ENCODE measurements at regions of chr16 and their contacts with region 1.

Region 1: DNA sequence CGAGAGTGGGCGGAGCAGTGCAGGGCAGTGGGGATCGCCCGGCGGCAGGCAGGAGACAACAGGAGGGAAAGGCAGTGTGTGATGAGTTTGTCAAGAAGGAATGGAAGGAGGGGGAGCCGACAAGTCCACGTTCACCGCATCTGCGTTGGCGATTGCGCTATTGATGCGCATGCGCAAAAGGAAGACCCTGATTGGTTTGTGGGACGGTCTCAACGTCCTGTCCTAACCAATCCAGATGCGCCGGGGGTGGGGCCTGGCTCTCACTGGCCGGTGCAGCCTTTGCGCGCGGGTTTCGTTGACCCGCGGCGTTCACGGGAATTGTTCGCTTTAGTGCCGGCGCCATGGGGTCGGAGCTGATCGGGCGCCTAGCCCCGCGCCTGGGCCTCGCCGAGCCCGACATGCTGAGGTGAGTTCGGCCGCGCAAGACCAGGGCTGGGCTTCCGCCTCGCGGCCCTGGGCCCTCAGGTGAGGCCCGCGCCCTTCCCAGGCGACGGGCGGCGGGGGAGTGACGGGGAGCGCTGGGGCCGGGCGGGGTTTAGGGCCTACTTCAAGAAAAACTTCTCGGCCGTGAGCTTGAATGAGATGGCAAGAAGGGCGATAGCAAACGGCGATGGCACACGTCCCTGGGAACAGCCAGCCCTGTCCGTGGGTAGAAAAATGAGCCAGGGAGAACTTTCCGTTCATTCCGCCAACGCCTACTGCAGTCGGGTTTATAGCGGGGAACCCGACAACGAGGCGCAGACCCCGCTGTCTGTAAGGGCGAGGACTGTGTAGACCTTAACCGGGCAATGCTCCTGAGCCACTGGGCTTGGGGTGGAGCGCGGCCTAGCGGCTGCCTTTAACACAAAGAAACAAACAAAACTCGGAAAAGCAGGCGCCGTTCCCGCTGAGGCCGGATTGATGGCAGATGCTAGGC is at the start of gene ORC6:
- DNase-seq: peak; percentile 98
- H3K4me3 Mint-ChIP-seq: no peak within 1 kb of the TSS
- H3K27ac Mint-ChIP-seq: no peak within 1 kb of the TSS
- H3K4me1 Mint-ChIP-seq: peaks cover 42% of the 10 kb centered on the region
- H3K27me3 Mint-ChIP-seq: no peaks in the 10 kb centered on the region
- total RNA-seq, gene ORC6: 48.6 to 51.7 TPM

Region 2: DNA sequence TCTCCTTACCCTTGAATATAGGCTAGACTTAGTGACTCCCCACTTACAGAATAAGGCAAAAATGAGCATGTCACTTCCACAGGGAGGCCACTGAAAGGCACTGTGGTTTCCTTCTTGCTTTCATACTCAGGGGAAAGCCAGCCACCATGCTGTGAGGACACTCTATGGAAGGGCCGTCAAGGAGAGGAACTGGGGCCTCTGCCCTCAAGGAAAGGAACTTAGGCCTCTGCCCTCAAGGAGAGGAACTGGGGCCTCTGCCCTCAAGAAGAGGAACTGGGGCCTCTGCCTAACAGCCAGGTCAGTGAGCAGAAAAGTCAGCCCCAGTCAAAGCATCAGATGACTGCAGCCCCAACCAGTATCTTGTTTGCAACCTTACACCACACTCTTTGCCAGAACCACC is 30.7 kb before region 1 on chr16:
- CTCF ChIA-PET with region 1: no interaction called
- POLR2A ChIA-PET with region 1: no interaction called
- intact Hi-C with region 1: loop called (anchors 1 kb)
- DNase-seq: peak; percentile 57
- H3K4me3 Mint-ChIP-seq: no peak overlapping the region
- H3K27ac Mint-ChIP-seq: peak overlapping the region; percentile 64
- H3K4me1 Mint-ChIP-seq: peaks cover 12% of the 10 kb centered on the region
- H3K27me3 Mint-ChIP-seq: no peaks in the 10 kb centered on the region

Region 3: DNA sequence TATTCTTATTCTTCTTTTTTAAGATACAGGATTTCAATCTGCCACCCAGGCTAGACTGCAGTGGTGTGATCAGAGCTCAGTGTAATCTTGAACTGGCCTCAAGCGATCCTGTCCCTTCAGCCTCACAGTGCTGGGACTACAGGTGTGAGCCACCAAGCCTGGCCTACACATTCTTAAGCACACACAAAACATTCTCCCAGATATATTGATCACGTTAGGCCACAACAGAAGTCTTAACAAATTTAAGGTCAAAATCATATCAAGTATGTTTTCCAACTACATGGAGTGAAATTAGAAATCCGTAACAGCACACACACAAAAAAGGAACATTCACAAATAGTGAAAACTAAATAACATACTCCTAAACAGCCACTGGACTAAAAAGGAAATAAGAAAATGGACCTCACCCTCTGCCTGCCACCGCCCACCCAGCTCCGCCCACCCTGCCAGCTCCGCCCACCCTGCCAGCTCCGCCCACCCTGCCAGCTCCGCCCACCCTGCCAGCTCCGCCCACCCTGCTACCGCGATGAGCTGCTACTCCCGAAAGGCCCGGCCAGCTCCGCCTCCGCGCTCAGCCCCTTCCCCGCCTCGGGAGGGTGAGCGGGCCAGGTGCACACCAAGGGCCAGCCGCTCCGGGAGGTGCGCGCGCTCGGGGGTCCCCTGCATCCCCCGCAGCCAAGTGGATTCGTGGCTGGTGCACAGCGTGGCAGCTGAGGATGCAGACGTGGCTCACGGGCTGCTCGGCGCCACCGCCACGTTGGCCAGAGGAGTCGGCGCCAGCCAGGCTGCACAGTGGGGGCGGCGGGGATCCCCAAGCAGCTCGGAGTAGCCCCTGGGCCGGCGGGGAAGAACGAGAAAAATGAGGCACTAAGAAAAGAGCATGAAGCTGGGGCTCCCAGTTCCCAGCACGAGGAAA is 100.1 kb after region 1 on chr16:
- CTCF ChIA-PET with region 1: no interaction called
- POLR2A ChIA-PET with region 1: no interaction called
- intact Hi-C with region 1: loop called (anchors 1 kb)
- DNase-seq: peak; percentile 88
- H3K4me3 Mint-ChIP-seq: peak overlapping the region; percentile 69
- H3K27ac Mint-ChIP-seq: peak overlapping the region; percentile 7
- H3K4me1 Mint-ChIP-seq: peaks cover 22% of the 10 kb centered on the region
- H3K27me3 Mint-ChIP-seq: no peaks in the 10 kb centered on the region

Region 4: DNA sequence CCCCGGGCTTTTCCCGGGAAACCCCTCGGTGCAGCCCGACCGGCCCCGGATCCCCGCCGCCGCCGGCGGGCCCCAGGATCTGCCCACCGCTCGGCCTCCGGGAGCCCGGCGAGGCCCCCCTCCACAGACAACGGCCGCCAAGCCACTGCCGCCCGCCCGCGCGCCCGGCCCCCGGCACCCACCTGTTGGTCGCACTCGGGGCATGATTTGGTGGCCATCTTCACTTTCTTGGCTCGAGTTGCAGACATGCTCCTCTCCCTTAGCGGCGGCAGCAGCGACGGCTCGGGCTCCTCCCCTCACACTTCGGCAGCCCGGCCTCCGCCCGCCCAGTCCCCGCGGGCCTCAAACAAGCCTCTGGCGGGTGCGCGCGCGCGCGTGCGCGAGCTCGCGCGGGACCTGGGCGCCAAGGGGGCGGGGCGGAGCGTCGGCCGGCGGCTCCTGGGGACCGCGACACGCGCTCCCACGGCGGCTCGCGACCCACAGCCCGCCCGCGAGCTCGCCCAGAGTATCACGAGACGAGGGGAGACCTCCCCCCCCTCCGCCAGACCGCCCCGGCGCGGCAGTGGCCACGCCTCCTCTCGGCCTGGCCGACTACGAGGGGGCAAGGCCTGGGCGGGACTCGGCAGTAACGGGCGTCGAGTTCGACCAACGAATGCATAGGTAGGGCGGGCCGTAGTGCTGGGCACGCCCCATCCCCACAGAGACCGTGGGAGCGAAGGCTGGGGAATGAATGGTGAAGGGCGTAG is 141.5 kb after region 1 on chr16 and contains the start of gene C16orf87:
- CTCF ChIA-PET with region 1: interaction called, 3 read pairs
- POLR2A ChIA-PET with region 1: no interaction called
- intact Hi-C with region 1: loop called (anchors 1 kb)
- DNase-seq: peak; percentile 93
- H3K4me3 Mint-ChIP-seq: peak within 1 kb of the TSS; percentile 90
- H3K27ac Mint-ChIP-seq: peak within 1 kb of the TSS; percentile 97
- H3K4me1 Mint-ChIP-seq: peaks cover 33% of the 10 kb centered on the region
- H3K27me3 Mint-ChIP-seq: no peaks in the 10 kb centered on the region
- total RNA-seq, gene C16orf87: 18.1 to 18.2 TPM

Region 5: GRCh38 chr16:46973207-46973995 is 283.8 kb after region 1 on chr16 and contains the start of gene DNAJA2:
- CTCF ChIA-PET with region 1: no interaction called
- POLR2A ChIA-PET with region 1: no interaction called
- intact Hi-C with region 1: loop called (anchors 1 kb)
- DNase-seq: peak; percentile 94
- H3K4me3 Mint-ChIP-seq: peak within 1 kb of the TSS; percentile 98
- H3K27ac Mint-ChIP-seq: peak within 1 kb of the TSS; percentile 98
- H3K4me1 Mint-ChIP-seq: peaks cover 59% of the 10 kb centered on the region
- H3K27me3 Mint-ChIP-seq: no peaks in the 10 kb centered on the region
- total RNA-seq, gene DNAJA2: 78.9 to 80.6 TPM

Region 6: GRCh38 chr16:46996391-46996790 is 306.8 kb after region 1 on chr16:
- CTCF ChIA-PET with region 1: no interaction called
- POLR2A ChIA-PET with region 1: no interaction called
- intact Hi-C with region 1: no loop called
- DNase-seq: peak; percentile 14
- H3K4me3 Mint-ChIP-seq: no peak overlapping the region
- H3K27ac Mint-ChIP-seq: no peak overlapping the region
- H3K4me1 Mint-ChIP-seq: peaks cover 4% of the 10 kb centered on the region
- H3K27me3 Mint-ChIP-seq: no peaks in the 10 kb centered on the region

Measured in activated CD4-positive, alpha-beta memory T cell treated with anti-CD3 and anti-CD28 coated beads for 36 hours (primary cell).